Posterior cingulate gyrus (tissue), 11 donors: ENCODE measurements at regions of chr20 and their contacts with region 1.

Region 1: DNA sequence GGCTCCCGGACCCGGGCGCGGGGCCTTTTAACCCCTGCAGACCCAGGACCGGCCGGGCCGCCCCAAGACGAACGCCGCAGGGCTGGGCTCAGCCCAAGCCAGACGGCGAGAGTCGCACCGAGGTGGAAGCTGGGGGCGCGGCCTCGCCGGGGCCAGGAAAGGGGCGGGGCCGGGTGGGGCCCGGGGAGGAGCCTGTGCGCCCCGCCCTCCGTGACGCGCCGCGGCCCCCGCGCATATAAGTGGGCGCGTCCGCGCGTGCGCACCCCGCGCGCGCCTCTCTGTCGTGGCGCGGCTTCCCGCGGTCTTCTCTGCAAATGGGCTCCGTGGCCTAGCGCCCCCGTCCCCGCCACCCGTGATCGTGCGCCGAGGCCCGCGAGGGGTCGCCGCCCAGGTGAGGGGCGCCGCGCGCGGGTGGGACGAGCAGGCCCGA is at the start of gene PPDPF:
- DNase-seq: peak; percentile 69 to 98 (median 80)

Region 2: DNA sequence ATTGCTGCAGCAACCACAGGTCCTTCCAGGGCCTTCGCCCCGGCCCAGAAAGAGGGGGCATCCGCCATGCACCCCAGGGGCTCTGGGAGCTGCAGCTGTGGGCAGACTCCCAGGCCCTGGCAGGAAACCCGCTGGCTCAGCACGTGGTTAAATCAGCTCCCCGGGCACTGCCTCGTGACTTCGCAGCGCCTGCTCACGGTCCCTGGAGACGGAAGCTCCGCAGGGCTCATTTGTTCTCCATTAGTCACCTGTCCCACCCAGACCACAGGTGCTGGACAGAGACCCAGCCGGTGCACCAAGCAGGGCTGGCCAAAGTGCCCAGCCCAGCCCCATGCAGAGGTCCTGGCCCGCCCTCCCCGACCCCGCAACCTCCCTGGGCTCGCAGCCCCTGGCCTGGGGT is 62.8 kb before region 1 on chr20:
- intact Hi-C with region 1: no loop called
- DNase-seq: peak; percentile 46 to 96 (median 78)

Region 3: GRCh38 chr20:63495741-63496595 is 24.6 kb before region 1 on chr20:
- intact Hi-C with region 1: loop called (anchors 1 kb)
- DNase-seq: peak in 8 of 10 donors; percentile 61 to 93 (median 74)

Region 4: DNA sequence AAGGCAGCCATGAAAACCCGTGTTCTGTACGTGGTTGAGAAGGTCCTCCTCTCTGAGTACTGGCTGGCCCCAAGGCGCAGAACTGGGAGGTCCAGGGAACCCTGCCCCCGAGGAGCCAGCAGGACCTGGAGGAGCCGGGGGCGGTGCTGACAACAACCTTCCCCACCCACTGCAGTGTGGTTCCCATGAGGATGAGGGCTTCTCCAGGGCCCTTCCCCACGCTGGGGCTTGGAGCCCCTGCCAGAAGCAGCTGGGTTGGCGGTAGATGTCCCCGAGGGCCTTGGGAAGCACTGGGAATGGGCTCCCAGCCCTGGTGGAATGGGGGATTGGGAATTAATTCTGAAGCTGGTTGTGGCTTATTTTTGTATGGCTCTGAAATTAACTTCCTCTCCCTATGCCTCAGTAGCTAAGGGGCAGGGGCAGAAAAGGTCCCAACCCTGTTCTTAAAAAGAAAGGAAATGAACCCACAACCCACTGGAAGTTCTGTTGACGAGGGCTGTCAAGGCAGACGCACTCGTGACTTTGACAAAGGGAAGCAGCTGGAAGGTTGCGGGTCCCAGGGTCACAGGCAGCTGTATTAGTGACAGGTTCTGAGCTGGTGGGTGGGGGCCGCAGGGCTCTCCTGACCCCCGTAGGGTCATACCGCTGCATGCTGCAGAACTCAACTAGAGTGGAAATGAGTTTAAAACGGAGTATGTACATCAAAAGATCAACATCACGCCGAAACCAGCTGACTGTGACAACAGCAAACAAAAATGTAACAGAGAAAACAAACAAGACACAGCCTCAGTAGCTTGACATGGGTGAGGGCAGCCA is 67.5 kb after region 1 on chr20:
- intact Hi-C with region 1: no loop called
- DNase-seq: peak in 1 of 10 donors; percentile 64